MCF 10A (cell line): ENCODE measurements at regions of chr3 and their contacts with region 1.

Region 1: GRCh38 chr3:40580494-40581091 is 55.8 kb downstream of the ZNF621 start:
- DNase-seq: peak; percentile 77
- H3K4me3 Mint-ChIP-seq: no peak overlapping the region
- H3K27ac Mint-ChIP-seq: no peak overlapping the region
- H3K4me1 Mint-ChIP-seq: peaks cover 10% of the 10 kb centered on the region
- H3K27me3 Mint-ChIP-seq: peaks cover 10% of the 10 kb centered on the region
- CTCF ChIP-seq: peak; percentile 88

Region 2: GRCh38 chr3:40557575-40558161 is 22.9 kb before region 1 on chr3:
- CTCF ChIA-PET with region 1: interaction called, 14 read pairs
- POLR2A ChIA-PET with region 1: no interaction called
- intact Hi-C with region 1: no loop called
- DNase-seq: no peak
- H3K4me3 Mint-ChIP-seq: no peak overlapping the region
- H3K27ac Mint-ChIP-seq: no peak overlapping the region
- H3K4me1 Mint-ChIP-seq: no peaks in the 10 kb centered on the region
- H3K27me3 Mint-ChIP-seq: no peaks in the 10 kb centered on the region
- CTCF ChIP-seq: no peak

Region 3: GRCh38 chr3:40672861-40673260 is 92.3 kb after region 1 on chr3:
- CTCF ChIA-PET with region 1: interaction called, 3 read pairs
- POLR2A ChIA-PET with region 1: no interaction called
- intact Hi-C with region 1: loop called (anchors 1 kb)
- DNase-seq: no peak
- H3K4me3 Mint-ChIP-seq: no peak overlapping the region
- H3K27ac Mint-ChIP-seq: no peak overlapping the region
- H3K4me1 Mint-ChIP-seq: no peaks in the 10 kb centered on the region
- H3K27me3 Mint-ChIP-seq: no peaks in the 10 kb centered on the region
- CTCF ChIP-seq: no peak

Region 4: DNA sequence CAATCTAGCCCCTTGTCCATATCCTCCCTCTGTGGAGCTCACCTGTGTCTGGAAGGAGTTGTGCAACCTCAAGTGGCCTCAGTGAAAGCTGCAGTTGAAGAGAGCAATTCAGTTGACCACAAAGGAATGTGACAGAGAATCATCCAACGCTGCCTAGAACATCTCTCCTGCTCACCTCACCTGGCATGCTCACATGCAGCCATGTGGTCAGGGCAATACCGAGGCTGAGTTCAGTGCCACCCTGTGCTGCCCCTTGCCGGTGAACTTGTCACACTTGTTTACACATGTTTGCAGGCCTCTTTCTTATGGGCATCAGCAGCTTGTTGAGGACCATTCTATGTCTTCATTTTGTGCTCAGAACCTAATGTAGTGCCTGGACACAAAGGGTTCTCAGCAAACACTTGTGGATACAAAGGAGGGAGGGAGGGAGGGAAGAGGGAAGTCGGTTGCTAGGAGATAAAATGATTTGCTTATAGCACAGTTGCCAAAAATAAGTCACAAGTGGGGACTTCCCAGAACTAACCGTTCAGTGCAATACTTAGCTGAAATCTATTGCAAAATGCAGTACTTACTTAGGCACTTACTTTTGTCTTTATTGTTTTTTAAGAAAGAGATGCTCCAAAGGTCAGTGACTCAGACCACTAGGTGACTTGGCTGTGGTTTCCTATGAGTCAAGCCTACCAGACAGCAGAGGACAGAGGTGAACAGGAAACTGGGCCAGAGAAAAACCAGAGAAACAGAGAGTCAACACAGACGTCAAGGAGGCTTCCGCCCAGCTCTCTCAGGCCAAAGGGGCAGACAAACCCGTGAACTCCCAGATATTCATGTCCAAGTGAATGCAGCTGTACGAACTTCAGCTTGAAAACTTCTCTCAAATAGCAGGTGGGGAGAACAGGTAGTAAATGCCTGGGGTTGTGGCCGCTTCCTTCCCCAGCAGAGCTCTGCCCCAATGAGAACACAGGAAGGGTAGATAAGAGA is 390.9 kb after region 1 on chr3:
- CTCF ChIA-PET with region 1: interaction called, 3 read pairs
- POLR2A ChIA-PET with region 1: no interaction called
- intact Hi-C with region 1: loop called (anchors 2 kb)
- DNase-seq: peak; percentile 98
- H3K4me3 Mint-ChIP-seq: peak overlapping the region; percentile 5
- H3K27ac Mint-ChIP-seq: peak overlapping the region; percentile 98
- H3K4me1 Mint-ChIP-seq: peaks cover 20% of the 10 kb centered on the region
- H3K27me3 Mint-ChIP-seq: no peaks in the 10 kb centered on the region
- CTCF ChIP-seq: peak; percentile 11

Region 5: GRCh38 chr3:41872157-41872556 is 1291.6 kb after region 1 on chr3:
- CTCF ChIA-PET with region 1: interaction called, 139 read pairs
- POLR2A ChIA-PET with region 1: no interaction called
- intact Hi-C with region 1: no loop called
- DNase-seq: peak; percentile 3
- H3K4me3 Mint-ChIP-seq: no peak overlapping the region
- H3K27ac Mint-ChIP-seq: no peak overlapping the region
- H3K4me1 Mint-ChIP-seq: peaks cover 8% of the 10 kb centered on the region
- H3K27me3 Mint-ChIP-seq: no peaks in the 10 kb centered on the region
- CTCF ChIP-seq: no peak